Naive thymus-derived CD4-positive, alpha-beta T cell (primary cell): ENCODE measurements at regions of chr11 and their contacts with region 1.

Region 1: DNA sequence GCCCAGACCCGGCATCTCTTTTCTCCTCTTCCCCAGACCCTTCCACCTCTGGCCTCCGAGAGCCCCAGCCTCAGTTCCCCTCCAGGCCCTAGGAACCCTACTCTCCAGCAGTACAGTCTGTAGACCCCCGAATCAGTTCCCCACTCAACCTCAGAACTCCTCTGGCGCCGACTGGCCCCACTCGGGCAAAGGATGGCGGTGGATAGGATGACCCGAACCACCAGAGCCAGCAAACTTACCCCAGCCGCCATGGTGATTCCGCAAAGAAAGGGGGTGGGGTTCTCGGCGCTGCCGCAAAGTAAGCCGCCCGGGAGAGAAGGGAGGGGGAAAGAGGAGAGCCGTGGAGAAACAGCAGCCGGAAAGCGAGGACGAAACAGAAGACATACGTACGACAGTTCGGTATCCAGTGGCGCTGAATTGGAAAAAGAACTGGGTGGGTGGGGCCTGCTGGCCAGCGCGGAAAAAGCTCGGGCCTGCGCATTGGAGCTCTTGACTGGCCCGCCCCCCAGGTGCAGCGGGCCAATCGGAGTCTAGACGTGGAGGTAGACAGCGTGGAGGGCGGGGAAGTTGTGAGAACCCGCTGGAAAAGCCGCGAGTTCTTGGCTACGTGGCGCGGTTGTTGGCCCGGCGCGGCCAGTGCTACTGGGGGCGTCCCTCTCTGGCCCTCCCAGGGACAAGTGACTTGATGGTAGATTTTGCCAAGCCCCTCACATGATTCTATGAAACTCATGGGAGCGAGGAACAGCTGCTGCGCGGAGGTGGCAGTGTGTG is at the start of gene EEF1G:
- DNase-seq: peak; percentile 88 to 100 (median 99)
- ATAC-seq: peak; percentile 96
- H3K4me3 ChIP-seq: peak within 1 kb of the TSS; percentile 82
- H3K4me3 Mint-ChIP-seq: peak within 1 kb of the TSS; percentile 94 to 100 (median 97)
- H3K27ac ChIP-seq: peak within 1 kb of the TSS; percentile 88
- H3K27ac Mint-ChIP-seq: peak within 1 kb of the TSS; percentile 81 to 98 (median 95)
- H3K4me1 ChIP-seq: peaks cover 8 to 11% of the 10 kb centered on the region in 2 donors
- H3K4me1 Mint-ChIP-seq: peaks cover 39 to 61% (median 45%) of the 10 kb centered on the region in 7 donors
- H3K27me3 ChIP-seq: no peaks in the 10 kb centered on the region
- H3K27me3 Mint-ChIP-seq: no peaks in the 10 kb centered on the region
- total RNA-seq, gene EEF1G: 1,186 to 2,550 (median 2,338) TPM

Region 2: GRCh38 chr11:62542750-62543567 is 30.8 kb before region 1 on chr11:
- CTCF ChIA-PET with region 1: interaction called, 4 read pairs
- POLR2A ChIA-PET with region 1: interaction called, 5 read pairs
- intact Hi-C with region 1: loop called in 1 of 2 experiments (anchors 1 kb)
- DNase-seq: peak; percentile 37 to 84 (median 66)
- ATAC-seq: peak; percentile 61
- H3K4me3 ChIP-seq: peak overlapping the region; percentile 87
- H3K4me3 Mint-ChIP-seq: peak overlapping the region; percentile 48 to 100 (median 75)
- H3K27ac ChIP-seq: peak overlapping the region; percentile 84
- H3K27ac Mint-ChIP-seq: peak overlapping the region; percentile 2 to 95 (median 70)
- H3K4me1 ChIP-seq: peaks cover 39 to 56% of the 10 kb centered on the region in 2 donors
- H3K4me1 Mint-ChIP-seq: peaks cover 36 to 82% (median 63%) of the 10 kb centered on the region in 7 donors
- H3K27me3 ChIP-seq: no peaks in the 10 kb centered on the region
- H3K27me3 Mint-ChIP-seq: peaks cover 0 to 5% (median 0%) of the 10 kb centered on the region in 5 donors

Region 3: DNA sequence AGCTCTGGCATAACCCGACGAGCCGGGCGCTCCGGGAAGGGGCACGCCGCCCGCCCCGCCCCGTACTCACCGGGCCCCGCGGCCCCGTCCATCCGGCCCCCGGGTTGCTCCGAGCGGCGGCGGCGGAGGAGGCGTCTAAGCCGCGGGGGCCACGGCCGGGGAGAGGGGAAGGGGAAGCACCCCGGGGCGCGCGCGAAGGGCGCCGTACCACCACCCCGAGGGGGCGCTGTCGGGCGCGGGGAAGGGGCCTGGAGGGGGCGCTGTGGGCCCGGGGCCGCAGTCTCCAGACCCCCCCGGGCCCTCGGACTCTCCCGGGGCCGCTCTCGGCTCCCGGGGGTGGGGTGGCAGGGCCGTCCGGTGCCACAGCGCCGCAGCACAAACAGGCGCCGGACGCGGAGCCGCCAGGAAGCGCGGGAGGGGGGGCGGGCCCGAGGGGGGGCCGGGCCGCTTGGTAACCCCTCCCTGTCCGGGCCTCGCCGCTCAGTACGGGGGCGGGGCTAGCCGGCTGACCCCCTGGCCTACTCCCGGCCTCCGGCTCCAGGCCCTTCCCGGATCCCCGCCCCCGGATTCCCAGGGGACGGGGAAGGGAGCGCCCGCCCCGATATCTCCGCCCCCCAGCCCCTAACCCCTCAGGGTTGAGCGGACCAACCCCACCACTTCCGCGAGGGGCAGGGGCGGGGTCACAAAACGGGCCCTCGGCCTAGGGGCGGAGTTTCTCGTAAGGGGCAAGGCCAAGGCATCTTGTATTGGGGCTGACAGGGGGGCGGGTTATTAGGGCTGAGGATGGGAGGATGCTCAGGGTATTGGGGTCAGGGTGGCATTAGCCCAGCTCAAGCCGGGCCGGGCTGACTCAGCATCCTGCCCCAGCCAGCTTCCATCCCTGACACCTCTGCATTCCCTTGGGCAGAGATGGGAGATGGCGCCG is 38.9 kb after region 1 on chr11 and contains the starts of genes EML3 and ROM1:
- CTCF ChIA-PET with region 1: interaction called, 4 read pairs
- POLR2A ChIA-PET with region 1: interaction called, 5 read pairs
- intact Hi-C with region 1: loop called in 1 of 2 experiments (anchors 1 kb)
- DNase-seq: peak; percentile 74 to 96 (median 83)
- ATAC-seq: peak; percentile 90
- H3K4me3 ChIP-seq: peak within 1 kb of the TSS; percentile 99
- H3K4me3 Mint-ChIP-seq: peak within 1 kb of the TSS; percentile 89 to 100 (median 96)
- H3K27ac ChIP-seq: peak within 1 kb of the TSS; percentile 92
- H3K27ac Mint-ChIP-seq: peak within 1 kb of the TSS; percentile 93 to 100 (median 97)
- H3K4me1 ChIP-seq: peaks cover 19 to 32% of the 10 kb centered on the region in 2 donors
- H3K4me1 Mint-ChIP-seq: peaks cover 31 to 56% (median 48%) of the 10 kb centered on the region in 7 donors
- H3K27me3 ChIP-seq: no peaks in the 10 kb centered on the region
- H3K27me3 Mint-ChIP-seq: no peaks in the 10 kb centered on the region
- total RNA-seq, gene EML3: 152 to 209 (median 188) TPM
- total RNA-seq, gene ROM1: 1.2 to 2.4 (median 2.0) TPM

Region 4: DNA sequence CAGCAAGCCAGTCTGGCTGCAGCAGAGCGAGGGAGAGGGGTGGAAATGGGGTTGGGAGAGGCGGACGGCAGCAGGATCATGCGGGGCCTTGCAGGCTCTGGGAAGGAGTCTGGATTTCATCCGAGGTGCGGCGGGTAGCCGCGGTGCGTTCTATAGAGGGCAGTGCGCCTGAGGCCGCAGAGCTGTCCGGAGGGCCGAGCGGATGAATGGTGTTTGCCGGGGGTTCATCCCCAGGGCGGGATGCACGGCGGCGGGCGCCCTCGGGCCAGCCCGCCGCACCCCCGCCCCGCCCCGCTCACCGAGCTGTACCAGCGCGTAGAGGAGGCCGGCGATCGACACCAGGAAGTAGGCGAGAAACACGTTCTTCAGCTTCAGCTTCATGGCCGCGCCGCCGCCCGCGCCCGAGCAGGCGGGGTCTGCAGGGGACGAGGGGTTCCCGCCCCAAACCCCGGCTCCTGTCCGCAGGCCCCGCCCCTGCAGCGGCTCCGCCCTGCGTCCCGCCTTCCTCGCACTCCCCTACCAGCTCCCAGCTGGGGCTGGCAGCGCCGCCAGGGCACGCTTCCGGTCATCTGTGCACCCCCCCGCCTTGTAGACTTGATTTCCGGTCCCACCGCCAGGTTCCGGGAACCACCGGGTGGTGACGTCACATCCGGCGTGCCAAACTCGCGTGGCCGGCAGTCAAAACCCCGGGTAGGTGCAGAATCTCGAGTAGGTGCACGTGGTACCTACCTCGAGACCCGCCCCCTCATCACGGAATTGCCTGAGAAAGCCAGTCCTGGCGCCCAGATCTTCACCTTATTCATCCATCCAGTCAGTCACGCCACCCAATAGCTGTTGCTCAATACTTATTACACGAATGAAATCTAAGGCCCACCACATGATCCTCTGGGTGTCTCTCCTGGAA is 48.0 kb after region 1 on chr11 and contains the start of gene B3GAT3:
- CTCF ChIA-PET with region 1: no interaction called
- POLR2A ChIA-PET with region 1: interaction called, 8 read pairs
- intact Hi-C with region 1: loop called in 1 of 2 experiments (anchors 1 kb)
- DNase-seq: peak; percentile 87 to 97 (median 94)
- ATAC-seq: peak; percentile 93
- H3K4me3 ChIP-seq: peak within 1 kb of the TSS; percentile 97
- H3K4me3 Mint-ChIP-seq: peak within 1 kb of the TSS; percentile 91 to 99 (median 94)
- H3K27ac ChIP-seq: peak within 1 kb of the TSS; percentile 92
- H3K27ac Mint-ChIP-seq: peak within 1 kb of the TSS; percentile 92 to 99 (median 96)
- H3K4me1 ChIP-seq: peaks cover 11% of the 10 kb centered on the region in 2 donors
- H3K4me1 Mint-ChIP-seq: peaks cover 13 to 29% (median 26%) of the 10 kb centered on the region in 7 donors
- H3K27me3 ChIP-seq: no peaks in the 10 kb centered on the region
- H3K27me3 Mint-ChIP-seq: no peaks in the 10 kb centered on the region
- total RNA-seq, gene B3GAT3: 55.8 to 78.1 (median 71.2) TPM

Region 5: DNA sequence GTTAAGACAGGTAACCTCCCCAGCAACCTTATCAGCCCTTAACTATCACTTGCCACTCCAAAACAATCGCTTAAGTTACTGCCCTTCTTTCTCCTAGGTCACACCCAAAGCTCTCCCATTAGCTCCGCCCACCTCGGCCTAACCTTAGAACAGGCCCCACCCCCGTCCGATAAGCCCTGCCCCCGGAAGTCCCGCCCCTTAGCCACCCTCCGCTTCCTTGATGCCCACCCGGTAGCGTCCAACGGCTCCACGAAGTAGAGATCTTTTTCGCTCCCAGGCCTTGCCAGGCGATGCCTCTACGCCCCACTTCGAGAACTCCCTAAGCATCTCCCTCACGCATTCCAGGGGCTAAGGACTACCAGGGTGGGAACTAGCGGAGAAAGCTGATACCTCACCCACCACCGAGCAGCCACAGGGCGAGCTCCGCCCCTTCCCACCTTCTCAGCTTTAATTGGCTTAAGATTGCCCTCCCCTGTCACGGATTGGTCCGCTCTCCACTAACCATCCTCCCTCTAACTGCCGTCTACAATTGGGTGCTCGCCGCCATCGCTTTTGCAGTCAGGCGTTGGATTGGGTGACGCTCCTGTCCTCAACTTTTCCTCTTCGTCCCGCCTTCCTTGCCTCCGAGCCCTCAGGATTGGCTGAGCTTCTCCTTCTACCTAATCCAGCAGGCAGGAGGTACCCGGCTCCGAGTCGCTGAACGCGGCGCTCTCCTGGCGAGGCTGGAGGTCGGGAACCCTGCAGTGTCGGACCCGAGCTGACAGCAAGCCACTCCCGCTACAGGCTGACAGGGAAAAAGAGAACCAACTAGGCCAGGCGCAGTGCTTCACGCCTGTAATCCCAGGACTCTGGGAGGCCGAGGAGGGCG is 180.2 kb after region 1 on chr11 and contains the start of gene ZBTB3:
- CTCF ChIA-PET with region 1: interaction called, 5 read pairs
- POLR2A ChIA-PET with region 1: interaction called, 12 read pairs
- intact Hi-C with region 1: no loop called
- DNase-seq: peak; percentile 89 to 99 (median 98)
- ATAC-seq: peak; percentile 96
- H3K4me3 ChIP-seq: peak within 1 kb of the TSS; percentile 94
- H3K4me3 Mint-ChIP-seq: peak within 1 kb of the TSS; percentile 86 to 100 (median 98)
- H3K27ac ChIP-seq: peak within 1 kb of the TSS; percentile 83
- H3K27ac Mint-ChIP-seq: peak within 1 kb of the TSS; percentile 93 to 99 (median 95)
- H3K4me1 ChIP-seq: peaks cover 15 to 16% of the 10 kb centered on the region in 2 donors
- H3K4me1 Mint-ChIP-seq: peaks cover 9 to 41% (median 29%) of the 10 kb centered on the region in 7 donors
- H3K27me3 ChIP-seq: no peaks in the 10 kb centered on the region
- H3K27me3 Mint-ChIP-seq: no peaks in the 10 kb centered on the region
- total RNA-seq, gene ZBTB3: 6.4 to 24.1 (median 19.0) TPM

Region 6: DNA sequence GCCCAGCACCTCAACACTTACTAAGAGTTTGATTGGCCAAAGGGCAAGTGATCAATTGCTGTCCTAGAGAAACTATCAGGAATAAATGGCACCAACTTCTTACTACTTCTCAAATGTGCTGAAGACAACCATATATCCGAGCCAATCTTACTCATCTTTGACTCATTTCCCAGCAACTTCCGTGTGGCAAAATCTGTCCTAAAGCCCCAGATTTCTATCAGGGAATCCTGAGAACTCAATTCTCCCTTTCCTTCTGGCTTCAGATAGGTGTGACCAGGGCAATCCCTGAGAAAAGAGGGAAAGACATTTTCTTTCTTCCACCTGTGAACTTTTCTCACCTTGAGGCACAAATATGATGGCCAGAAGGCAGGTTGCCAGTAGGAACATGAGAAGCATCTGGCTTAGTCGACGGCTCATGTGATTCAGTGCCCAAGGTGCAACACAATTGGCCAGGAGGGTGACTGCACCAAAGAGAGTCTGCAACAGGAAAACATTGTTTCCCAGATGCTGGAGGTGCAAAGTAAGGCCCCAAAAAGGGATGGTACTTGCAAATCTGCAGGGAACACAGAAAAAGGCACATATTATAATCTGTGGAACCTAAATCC is 592.0 kb after region 1 on chr11:
- CTCF ChIA-PET with region 1: no interaction called
- POLR2A ChIA-PET with region 1: no interaction called
- intact Hi-C with region 1: no loop called
- DNase-seq: no peak
- ATAC-seq: no peak
- H3K4me3 ChIP-seq: no peak overlapping the region
- H3K4me3 Mint-ChIP-seq: no peak overlapping the region
- H3K27ac ChIP-seq: no peak overlapping the region
- H3K27ac Mint-ChIP-seq: no peak overlapping the region
- H3K4me1 ChIP-seq: no peaks in the 10 kb centered on the region
- H3K4me1 Mint-ChIP-seq: no peaks in the 10 kb centered on the region
- H3K27me3 ChIP-seq: peaks cover 3 to 10% of the 10 kb centered on the region in 2 donors
- H3K27me3 Mint-ChIP-seq: peaks cover 35 to 75% (median 52%) of the 10 kb centered on the region in 5 donors